GM12878 (cell line): ENCODE measurements at regions of chr12 and their contacts with region 1.

Region 1: GRCh38 chr12:103181366-103182152 is 224.1 kb downstream of the ASCL1 start:
- DNase-seq: peak; percentile 88
- ATAC-seq: peak; percentile 96
- H3K4me3 ChIP-seq: no peak overlapping the region
- H3K27ac ChIP-seq: peak overlapping the region; percentile 45; the same call in 1 of the 2 replicates
- H3K4me1 ChIP-seq: no peaks in the 10 kb centered on the region
- H3K27me3 ChIP-seq: no peaks in the 10 kb centered on the region
- CTCF ChIP-seq: peak in 2 of 3 experiments; percentile 6 to 49; a peak in 2 of 6 replicates
- EP300 ChIP-seq: peak in 1 of 2 experiments; percentile 68; a peak in 2 of 4 replicates
- POLR2A ChIP-seq: no peak
- RAD21 ChIP-seq: peak; percentile 71

Region 2: DNA sequence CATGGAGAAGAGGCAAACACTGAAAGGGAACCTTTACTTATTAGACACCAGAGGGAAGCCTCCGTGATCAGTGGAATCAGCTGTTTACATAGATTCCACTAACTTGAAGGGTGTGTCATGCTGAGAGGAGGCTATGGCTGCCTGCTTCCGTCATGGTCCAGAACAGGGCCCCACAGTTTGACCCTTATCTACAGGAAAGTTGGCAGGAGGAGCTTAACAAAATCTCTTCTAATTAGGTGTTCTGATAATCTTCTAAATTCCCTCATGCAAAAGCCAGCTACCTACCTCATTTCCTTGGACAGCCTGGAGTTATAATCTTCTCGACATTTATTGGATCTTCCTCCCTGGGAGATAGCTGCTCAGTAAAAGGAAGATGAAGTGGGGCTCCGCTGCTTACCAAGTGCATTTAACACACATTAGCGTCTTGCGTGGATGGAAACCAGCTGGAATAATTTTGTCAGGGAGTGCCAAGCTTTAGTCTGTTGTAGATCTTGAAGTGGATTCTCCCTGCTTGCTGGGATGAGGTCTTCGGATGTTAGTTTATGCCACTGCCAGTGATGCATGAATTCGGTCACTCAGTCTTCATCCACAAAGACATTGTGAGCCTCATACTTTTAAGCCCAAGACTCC is 435.5 kb before region 1 on chr12:
- CTCF ChIA-PET with region 1: no interaction called
- POLR2A ChIA-PET with region 1: no interaction called
- RAD21 ChIA-PET with region 1: no interaction called
- SMC1A ChIA-PET with region 1: no interaction called
- in situ Hi-C with region 1: no loop called
- intact Hi-C with region 1: no loop called
- DNase-seq: no peak
- ATAC-seq: no peak
- H3K4me3 ChIP-seq: no peak overlapping the region
- H3K27ac ChIP-seq: no peak overlapping the region
- H3K4me1 ChIP-seq: no peaks in the 10 kb centered on the region
- H3K27me3 ChIP-seq: no peaks in the 10 kb centered on the region
- CTCF ChIP-seq: no peak
- EP300 ChIP-seq: no peak
- POLR2A ChIP-seq: no peak
- RAD21 ChIP-seq: no peak

Region 3: DNA sequence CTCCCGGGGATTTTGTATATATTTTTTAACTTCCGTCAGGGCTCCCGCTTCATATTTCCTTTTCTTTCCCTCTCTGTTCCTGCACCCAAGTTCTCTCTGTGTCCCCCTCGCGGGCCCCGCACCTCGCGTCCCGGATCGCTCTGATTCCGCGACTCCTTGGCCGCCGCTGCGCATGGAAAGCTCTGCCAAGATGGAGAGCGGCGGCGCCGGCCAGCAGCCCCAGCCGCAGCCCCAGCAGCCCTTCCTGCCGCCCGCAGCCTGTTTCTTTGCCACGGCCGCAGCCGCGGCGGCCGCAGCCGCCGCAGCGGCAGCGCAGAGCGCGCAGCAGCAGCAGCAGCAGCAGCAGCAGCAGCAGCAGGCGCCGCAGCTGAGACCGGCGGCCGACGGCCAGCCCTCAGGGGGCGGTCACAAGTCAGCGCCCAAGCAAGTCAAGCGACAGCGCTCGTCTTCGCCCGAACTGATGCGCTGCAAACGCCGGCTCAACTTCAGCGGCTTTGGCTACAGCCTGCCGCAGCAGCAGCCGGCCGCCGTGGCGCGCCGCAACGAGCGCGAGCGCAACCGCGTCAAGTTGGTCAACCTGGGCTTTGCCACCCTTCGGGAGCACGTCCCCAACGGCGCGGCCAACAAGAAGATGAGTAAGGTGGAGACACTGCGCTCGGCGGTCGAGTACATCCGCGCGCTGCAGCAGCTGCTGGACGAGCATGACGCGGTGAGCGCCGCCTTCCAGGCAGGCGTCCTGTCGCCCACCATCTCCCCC is 223.3 kb before region 1 on chr12:
- CTCF ChIA-PET with region 1: interaction called, 20 read pairs
- POLR2A ChIA-PET with region 1: interaction called, 5 read pairs
- RAD21 ChIA-PET with region 1: interaction called, 62 read pairs
- SMC1A ChIA-PET with region 1: interaction called, 72 read pairs
- in situ Hi-C with region 1: no loop called
- intact Hi-C with region 1: no loop called
- DNase-seq: no peak
- ATAC-seq: peak; percentile 72
- H3K4me3 ChIP-seq: peak overlapping the region; percentile 81
- H3K27ac ChIP-seq: no peak overlapping the region
- H3K4me1 ChIP-seq: peaks cover 8% of the 10 kb centered on the region
- H3K27me3 ChIP-seq: peaks cover 0 to 24% of the 10 kb centered on the region in 2 experiments; a peak in 2 of 4 replicates
- CTCF ChIP-seq: peak in 2 of 3 experiments; percentile 7 to 15; a peak in 2 of 6 replicates
- EP300 ChIP-seq: no peak; a peak in 1 of 4 replicates
- POLR2A ChIP-seq: no peak
- RAD21 ChIP-seq: no peak

Region 4: DNA sequence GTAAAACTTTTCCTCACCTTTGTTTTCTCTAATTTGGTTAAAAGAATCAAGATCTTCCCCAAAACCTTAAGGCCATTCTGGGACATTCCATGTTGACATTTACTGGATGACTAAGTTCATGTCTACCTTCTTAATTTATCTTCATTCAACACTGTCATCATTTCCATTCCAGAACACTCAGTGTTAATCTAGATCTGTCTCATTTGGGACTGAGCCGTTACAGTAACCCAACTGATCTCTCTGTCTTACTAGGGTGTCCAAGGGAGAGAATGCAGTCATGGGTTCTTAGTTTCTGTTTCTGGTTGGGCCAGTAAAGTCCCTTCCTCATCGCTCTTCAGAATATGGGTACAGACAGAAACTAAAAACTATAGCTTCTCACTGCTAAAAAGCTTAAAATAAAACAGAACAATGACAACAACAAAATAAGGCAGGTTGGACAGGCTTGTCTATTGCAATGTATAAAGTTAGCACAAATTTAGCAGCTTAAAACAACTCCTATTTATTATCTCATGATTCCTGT is 79.3 kb before region 1 on chr12:
- CTCF ChIA-PET with region 1: interaction called, 14 read pairs
- POLR2A ChIA-PET with region 1: interaction called, 8 read pairs
- RAD21 ChIA-PET with region 1: interaction called, 67 read pairs
- SMC1A ChIA-PET with region 1: interaction called, 28 read pairs
- in situ Hi-C with region 1: no loop called
- intact Hi-C with region 1: loop called (anchors 2 kb)
- DNase-seq: peak; percentile 72
- ATAC-seq: peak; percentile 91
- H3K4me3 ChIP-seq: no peak overlapping the region
- H3K27ac ChIP-seq: peak overlapping the region; percentile 82
- H3K4me1 ChIP-seq: peaks cover 29% of the 10 kb centered on the region
- H3K27me3 ChIP-seq: no peaks in the 10 kb centered on the region
- CTCF ChIP-seq: no peak
- EP300 ChIP-seq: peak; percentile 73 to 89; a peak in 3 of 4 replicates
- POLR2A ChIP-seq: no peak
- RAD21 ChIP-seq: peak; percentile 22; the same call in 1 of the 2 replicates

Region 5: GRCh38 chr12:103140286-103140685 is 41.3 kb before region 1 on chr12:
- CTCF ChIA-PET with region 1: interaction called, 5 read pairs
- POLR2A ChIA-PET with region 1: interaction called, 3 read pairs
- RAD21 ChIA-PET with region 1: interaction called, 12 read pairs
- SMC1A ChIA-PET with region 1: interaction called, 25 read pairs
- in situ Hi-C with region 1: no loop called
- intact Hi-C with region 1: loop called (anchors 5 kb)
- DNase-seq: no peak
- ATAC-seq: no peak
- H3K4me3 ChIP-seq: no peak overlapping the region
- H3K27ac ChIP-seq: no peak overlapping the region
- H3K4me1 ChIP-seq: no peaks in the 10 kb centered on the region
- H3K27me3 ChIP-seq: no peaks in the 10 kb centered on the region
- CTCF ChIP-seq: no peak
- EP300 ChIP-seq: no peak
- POLR2A ChIP-seq: no peak
- RAD21 ChIP-seq: no peak

Region 6: GRCh38 chr12:103279444-103279843 is 97.9 kb after region 1 on chr12:
- CTCF ChIA-PET with region 1: interaction called, 5 read pairs
- POLR2A ChIA-PET with region 1: interaction called, 5 read pairs
- RAD21 ChIA-PET with region 1: interaction called, 18 read pairs
- SMC1A ChIA-PET with region 1: interaction called, 14 read pairs
- in situ Hi-C with region 1: no loop called
- intact Hi-C with region 1: loop called (anchors 2 kb)
- DNase-seq: peak; percentile 93
- ATAC-seq: peak; percentile 94
- H3K4me3 ChIP-seq: no peak overlapping the region
- H3K27ac ChIP-seq: peak overlapping the region; percentile 53; the same call in 1 of the 2 replicates
- H3K4me1 ChIP-seq: peaks cover 21% of the 10 kb centered on the region
- H3K27me3 ChIP-seq: no peaks in the 10 kb centered on the region
- CTCF ChIP-seq: no peak
- EP300 ChIP-seq: peak; percentile 83 to 93
- POLR2A ChIP-seq: no peak
- RAD21 ChIP-seq: 0 out of 2 replicates have a peak, but pooled peaks have one; percentile 8

Region 7: GRCh38 chr12:103431387-103431786 is 249.8 kb after region 1 on chr12:
- CTCF ChIA-PET with region 1: no interaction called
- POLR2A ChIA-PET with region 1: no interaction called
- RAD21 ChIA-PET with region 1: no interaction called
- SMC1A ChIA-PET with region 1: no interaction called
- in situ Hi-C with region 1: no loop called
- intact Hi-C with region 1: no loop called
- DNase-seq: no peak
- ATAC-seq: peak; percentile 91
- H3K4me3 ChIP-seq: no peak overlapping the region
- H3K27ac ChIP-seq: no peak overlapping the region
- H3K4me1 ChIP-seq: no peaks in the 10 kb centered on the region
- H3K27me3 ChIP-seq: no peaks in the 10 kb centered on the region
- CTCF ChIP-seq: no peak
- EP300 ChIP-seq: peak; percentile 47 to 57; a peak in 2 of 4 replicates
- POLR2A ChIP-seq: no peak
- RAD21 ChIP-seq: no peak

Region 8: GRCh38 chr12:103441437-103442181 is 260.1 kb after region 1 on chr12:
- CTCF ChIA-PET with region 1: no interaction called
- POLR2A ChIA-PET with region 1: no interaction called
- RAD21 ChIA-PET with region 1: interaction called, 12 read pairs
- SMC1A ChIA-PET with region 1: interaction called, 11 read pairs
- in situ Hi-C with region 1: no loop called
- intact Hi-C with region 1: loop called (anchors 5 kb)
- DNase-seq: peak; percentile 97
- ATAC-seq: peak; percentile 98
- H3K4me3 ChIP-seq: peak overlapping the region; percentile 58
- H3K27ac ChIP-seq: peak overlapping the region; percentile 71
- H3K4me1 ChIP-seq: peaks cover 22% of the 10 kb centered on the region
- H3K27me3 ChIP-seq: no peaks in the 10 kb centered on the region
- CTCF ChIP-seq: peak in 2 of 3 experiments; percentile 11 to 28; a peak in 1 of 6 replicates
- EP300 ChIP-seq: peak; percentile 72 to 96; a peak in 3 of 4 replicates
- POLR2A ChIP-seq: peak; percentile 64
- RAD21 ChIP-seq: peak; percentile 55